ENCODE measurements at regions of chr9 and their contacts with region 1.

Region 1: DNA sequence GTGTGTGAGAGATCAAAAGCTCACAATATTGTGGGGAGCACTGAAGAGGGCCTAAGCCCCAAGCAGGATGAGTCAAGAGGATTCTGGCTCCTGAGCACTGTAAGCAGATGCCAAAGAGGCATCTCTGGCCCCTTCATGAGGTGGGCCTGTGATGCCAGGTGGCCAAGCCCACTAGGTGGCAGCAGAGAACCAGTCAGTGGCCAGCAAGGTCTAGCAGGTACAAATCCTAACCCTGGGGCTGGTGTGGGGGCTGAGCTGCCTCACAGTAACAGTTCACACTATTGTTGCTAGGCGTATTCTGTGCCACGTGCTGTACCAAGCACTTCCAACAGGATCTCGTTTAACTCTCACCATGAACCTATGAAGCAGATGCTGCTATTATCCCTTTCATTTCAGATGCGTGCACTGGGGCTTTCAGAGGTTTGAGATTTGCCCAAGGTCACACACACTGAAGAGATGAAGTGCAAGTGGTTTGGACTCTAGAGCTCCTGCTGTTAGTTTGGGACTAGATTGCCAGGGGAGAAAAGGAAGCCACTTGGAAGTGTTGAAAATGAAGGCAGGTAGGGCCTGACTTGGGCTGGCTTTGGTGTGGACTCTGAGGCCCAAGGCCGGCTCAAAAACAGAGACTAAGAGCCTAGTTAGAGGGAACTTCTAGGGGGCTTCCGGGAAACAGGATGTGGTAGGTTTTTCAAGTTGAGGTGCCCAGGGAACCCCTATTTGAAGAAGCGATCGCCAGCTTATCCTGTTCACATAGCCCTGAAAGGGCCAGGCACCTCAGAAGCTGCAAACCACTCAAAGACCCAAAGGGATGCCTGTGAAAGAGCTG is 4.4 kb upstream of the MLANA start:
- DNase-seq: peak; percentile 93
- ATAC-seq: peak; percentile 99
- H3K4me3 Mint-ChIP-seq: no peak overlapping the region
- H3K27ac Mint-ChIP-seq: no peak overlapping the region
- H3K4me1 Mint-ChIP-seq: peaks cover 8% of the 10 kb centered on the region
- H3K27me3 Mint-ChIP-seq: no peaks in the 10 kb centered on the region
- CTCF ChIP-seq: peak; percentile 93

Region 2: GRCh38 chr9:5832543-5833529 is 53.5 kb before region 1 on chr9 and contains the start of gene ERMP1:
- CTCF ChIA-PET with region 1: interaction called, 42 read pairs
- POLR2A ChIA-PET with region 1: no interaction called
- intact Hi-C with region 1: no loop called
- DNase-seq: peak; percentile 90
- ATAC-seq: peak; percentile 89
- H3K4me3 Mint-ChIP-seq: peak within 1 kb of the TSS; percentile 92
- H3K27ac Mint-ChIP-seq: peak within 1 kb of the TSS; percentile 87
- H3K4me1 Mint-ChIP-seq: peaks cover 46% of the 10 kb centered on the region
- H3K27me3 Mint-ChIP-seq: no peaks in the 10 kb centered on the region
- CTCF ChIP-seq: peak; percentile 88
- total RNA-seq, gene ERMP1: 14.7 to 15.9 TPM

Region 3: GRCh38 chr9:5851445-5851844 is 34.9 kb before region 1 on chr9:
- CTCF ChIA-PET with region 1: interaction called, 14 read pairs
- POLR2A ChIA-PET with region 1: no interaction called
- intact Hi-C with region 1: no loop called
- DNase-seq: peak; percentile 70
- ATAC-seq: peak; percentile 93
- H3K4me3 Mint-ChIP-seq: no peak overlapping the region
- H3K27ac Mint-ChIP-seq: peak overlapping the region; percentile 1
- H3K4me1 Mint-ChIP-seq: peaks cover 53% of the 10 kb centered on the region
- H3K27me3 Mint-ChIP-seq: no peaks in the 10 kb centered on the region
- CTCF ChIP-seq: no peak

Region 4: GRCh38 chr9:5899292-5899691 is 13.0 kb after region 1 on chr9:
- CTCF ChIA-PET with region 1: interaction called, 66 read pairs
- POLR2A ChIA-PET with region 1: interaction called, 6 read pairs
- intact Hi-C with region 1: no loop called
- DNase-seq: no peak
- ATAC-seq: peak; percentile 30
- H3K4me3 Mint-ChIP-seq: no peak overlapping the region
- H3K27ac Mint-ChIP-seq: no peak overlapping the region
- H3K4me1 Mint-ChIP-seq: no peaks in the 10 kb centered on the region
- H3K27me3 Mint-ChIP-seq: no peaks in the 10 kb centered on the region
- CTCF ChIP-seq: peak; percentile 18

Region 5: GRCh38 chr9:6024020-6024554 is 137.8 kb after region 1 on chr9:
- CTCF ChIA-PET with region 1: interaction called, 13 read pairs
- POLR2A ChIA-PET with region 1: no interaction called
- intact Hi-C with region 1: no loop called
- DNase-seq: peak; percentile 54
- ATAC-seq: peak; percentile 90
- H3K4me3 Mint-ChIP-seq: no peak overlapping the region
- H3K27ac Mint-ChIP-seq: no peak overlapping the region
- H3K4me1 Mint-ChIP-seq: peaks cover 5% of the 10 kb centered on the region
- H3K27me3 Mint-ChIP-seq: peaks cover 1% of the 10 kb centered on the region
- CTCF ChIP-seq: peak; percentile 73

Region 6: DNA sequence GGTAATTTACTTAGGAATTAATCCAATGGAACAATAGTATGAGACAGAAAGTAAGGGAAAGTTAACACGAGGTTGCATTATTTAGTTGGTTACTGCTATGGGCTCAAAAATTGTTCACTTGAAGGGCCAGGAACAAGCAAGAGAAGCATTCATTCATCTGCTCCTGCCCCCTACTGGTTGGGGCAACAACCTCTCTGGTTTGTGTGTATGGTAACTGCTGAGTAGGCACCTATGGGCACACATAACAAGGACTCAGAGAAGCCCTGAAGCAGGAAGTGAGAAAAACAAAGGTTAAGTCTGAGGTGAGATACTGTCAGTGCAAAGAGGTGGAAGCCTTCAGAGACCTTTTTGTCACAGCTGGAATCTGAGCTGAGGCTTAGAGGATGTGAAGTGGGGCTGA is 163.5 kb after region 1 on chr9:
- CTCF ChIA-PET with region 1: interaction called, 49 read pairs
- POLR2A ChIA-PET with region 1: interaction called, 4 read pairs
- intact Hi-C with region 1: loop called (anchors 1 kb)
- DNase-seq: peak; percentile 70
- ATAC-seq: peak; percentile 92
- H3K4me3 Mint-ChIP-seq: no peak overlapping the region
- H3K27ac Mint-ChIP-seq: no peak overlapping the region
- H3K4me1 Mint-ChIP-seq: peaks cover 8% of the 10 kb centered on the region
- H3K27me3 Mint-ChIP-seq: peaks cover 8% of the 10 kb centered on the region
- CTCF ChIP-seq: peak; percentile 59